ENCODE measurements at regions of chr20 and their contacts with region 1.

Region 1: GRCh38 chr20:62318400-62319345 is 15.9 kb downstream of the ADRM1 start:
- DNase-seq: no peak
- H3K4me3 ChIP-seq: no peak overlapping the region
- CTCF ChIP-seq: no peak
- POLR2A ChIP-seq: no peak

Region 2: GRCh38 chr20:62368976-62369814 is 50.5 kb after region 1 on chr20:
- intact Hi-C with region 1: loop called (anchors 10 kb)
- DNase-seq: no peak
- H3K4me3 ChIP-seq: no peak overlapping the region
- CTCF ChIP-seq: no peak
- POLR2A ChIP-seq: no peak

Measured in lower leg skin (tissue), 4 donors.